Right ventricle myocardium superior (tissue), 1 donor: ENCODE measurements at regions of chr12 and their contacts with region 1.

Region 1: GRCh38 chr12:3299929-3300832 is 190.8 kb upstream of the PRMT8 start:
- DNase-seq: peak; percentile 92
- ATAC-seq: peak; percentile 87

Region 2: DNA sequence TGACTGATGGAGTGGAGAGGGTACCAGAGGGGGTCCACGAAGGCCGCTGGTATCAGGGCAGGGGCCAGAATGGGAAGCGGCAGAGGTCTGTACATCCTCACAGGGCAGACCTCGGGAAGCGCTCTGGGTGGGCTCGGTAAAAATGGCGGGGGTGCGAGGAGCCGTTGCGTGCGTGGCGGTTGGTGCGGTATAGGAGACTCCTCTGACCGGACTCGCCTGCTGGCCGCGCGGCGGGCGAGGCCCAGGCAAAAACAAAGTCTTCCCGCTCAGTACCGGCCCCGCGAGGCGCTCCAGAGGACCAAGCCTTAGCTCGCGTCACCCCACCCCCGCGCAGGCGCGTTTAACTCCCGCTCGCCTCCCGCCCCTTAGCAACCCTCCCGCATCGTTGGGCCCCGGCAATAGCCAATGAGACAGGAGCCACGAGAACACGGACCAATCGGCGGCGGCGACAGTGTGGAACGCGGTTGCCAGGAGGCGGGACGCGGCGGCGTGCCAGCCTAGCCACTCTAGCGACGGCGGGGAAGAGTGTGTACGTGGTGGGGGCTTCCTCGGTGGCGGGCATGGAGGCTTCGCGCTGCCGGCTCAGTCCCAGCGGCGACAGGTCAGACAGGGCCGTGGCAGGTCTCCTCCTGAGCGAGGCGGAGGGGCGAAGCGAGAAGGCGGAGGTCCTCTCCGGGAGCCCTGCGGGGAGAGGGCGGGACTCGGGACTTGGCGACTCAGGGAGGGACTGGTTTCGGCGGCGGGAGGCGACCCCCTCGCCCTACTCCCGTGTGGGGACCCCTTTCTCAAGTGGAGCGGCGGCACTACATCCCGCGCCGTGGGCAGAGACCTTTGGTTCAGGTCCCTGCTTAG is 409.6 kb before region 1 on chr12 and contains the start of gene TULP3:
- intact Hi-C with region 1: no loop called
- DNase-seq: peak; percentile 99
- ATAC-seq: peak; percentile 99
- total RNA-seq, gene TULP3: 4.6 TPM

Region 3: DNA sequence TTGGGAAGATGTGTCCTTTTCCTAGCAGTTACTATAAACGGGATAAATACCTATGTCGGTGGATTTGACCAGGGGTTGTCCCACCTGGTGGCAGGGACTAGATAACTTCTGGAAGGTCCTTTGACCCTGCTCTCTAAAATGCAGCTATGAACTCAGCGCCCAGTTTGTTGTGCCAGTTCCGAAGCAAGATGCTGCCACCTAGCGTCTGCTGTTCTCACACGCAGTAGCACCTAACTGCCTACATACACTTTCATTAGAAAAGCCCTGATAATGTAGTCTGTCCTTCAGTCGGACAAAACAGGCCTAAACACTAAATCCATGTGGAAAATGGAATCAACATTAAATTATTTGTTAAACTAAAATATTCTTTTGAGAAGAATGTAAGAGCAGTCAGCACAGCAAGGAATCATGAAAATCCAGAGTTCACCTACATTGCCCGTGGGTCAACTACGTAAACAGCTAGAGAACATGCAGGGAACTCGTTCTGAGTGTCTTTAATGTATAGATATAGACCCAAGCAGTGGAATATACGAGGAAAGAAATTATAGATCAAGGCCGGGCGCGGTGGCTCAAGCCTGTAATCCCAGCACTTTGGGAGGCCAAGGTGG is 503.8 kb after region 1 on chr12:
- intact Hi-C with region 1: loop called (anchors 5 kb)
- DNase-seq: peak; percentile 77
- ATAC-seq: peak; percentile 90